CD8-positive, alpha-beta T cell (primary cell): ENCODE measurements at regions of chr17 and their contacts with region 1.

Region 1: GRCh38 chr17:21457051-21458026 is 81.2 kb downstream of the KCNJ12 start:
- DNase-seq: peak; percentile 81 to 97 (median 90)
- ATAC-seq: peak; percentile 91
- H3K4me3 ChIP-seq: no peak overlapping the region
- H3K4me3 Mint-ChIP-seq: peak overlapping the region; percentile 15
- H3K27ac ChIP-seq: no peak overlapping the region
- H3K27ac Mint-ChIP-seq: peak overlapping the region; percentile 86
- H3K4me1 ChIP-seq: peaks cover 20% of the 10 kb centered on the region
- H3K4me1 Mint-ChIP-seq: peaks cover 22% of the 10 kb centered on the region
- H3K27me3 ChIP-seq: no peaks in the 10 kb centered on the region
- H3K27me3 Mint-ChIP-seq: peaks cover 7% of the 10 kb centered on the region
- CTCF ChIP-seq: peak; percentile 86

Region 2: DNA sequence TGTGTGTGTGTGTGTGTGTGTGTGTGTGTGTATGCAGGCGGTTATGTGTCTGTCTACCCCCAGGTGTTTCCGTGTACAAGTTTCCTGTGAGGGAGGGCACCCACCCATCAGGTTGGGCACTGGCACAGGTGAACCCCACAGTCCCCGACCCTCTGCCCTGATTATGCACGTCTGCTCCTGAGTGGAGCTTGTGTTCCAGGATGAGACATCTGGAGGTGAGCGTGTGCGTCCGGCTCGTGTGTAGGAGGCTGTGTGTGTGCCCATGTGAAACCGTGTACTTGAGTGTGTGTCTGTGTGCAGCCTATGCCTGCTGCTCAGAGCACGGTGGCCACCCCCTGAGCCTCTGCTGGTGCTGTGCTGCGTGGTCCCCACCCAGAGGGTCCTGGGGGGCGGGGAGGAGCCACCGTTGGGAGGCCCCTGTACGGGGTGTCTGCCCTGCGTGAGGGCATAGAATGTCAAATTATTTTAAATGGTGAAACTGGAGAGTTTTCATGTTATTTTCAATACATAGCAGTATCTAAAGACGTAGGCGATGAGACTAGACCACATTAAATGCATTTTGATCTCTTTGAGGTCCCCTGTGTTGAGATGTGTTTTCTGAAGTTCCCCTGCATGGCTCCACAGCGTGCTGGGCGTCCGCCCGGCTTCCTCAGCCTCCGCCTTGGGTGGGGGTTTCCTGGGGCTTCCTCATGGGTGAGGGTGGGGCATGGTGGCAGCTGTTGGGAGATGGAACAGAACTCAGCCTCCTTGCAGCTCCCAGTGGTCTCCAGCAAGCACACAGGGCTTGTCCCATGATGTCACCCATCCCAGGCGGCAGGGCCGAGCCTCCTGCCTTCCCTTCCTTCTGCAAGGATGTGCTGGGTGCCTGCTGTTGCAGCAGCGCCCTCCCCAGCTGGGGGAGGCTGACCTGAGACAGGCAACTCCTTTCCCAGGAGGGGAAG is 37.8 kb before region 1 on chr17:
- CTCF ChIA-PET with region 1: no interaction called
- POLR2A ChIA-PET with region 1: no interaction called
- intact Hi-C with region 1: loop called in 1 of 2 experiments (anchors 2 kb)
- DNase-seq: peak; percentile 15 to 90 (median 69)
- ATAC-seq: peak; percentile 79
- H3K4me3 ChIP-seq: peak overlapping the region; percentile 24 to 67
- H3K4me3 Mint-ChIP-seq: peak overlapping the region; percentile 81
- H3K27ac ChIP-seq: peak overlapping the region; percentile 48 to 88
- H3K27ac Mint-ChIP-seq: peak overlapping the region; percentile 99
- H3K4me1 ChIP-seq: peaks cover 41% of the 10 kb centered on the region
- H3K4me1 Mint-ChIP-seq: peaks cover 31% of the 10 kb centered on the region
- H3K27me3 ChIP-seq: no peaks in the 10 kb centered on the region
- H3K27me3 Mint-ChIP-seq: peaks cover 2% of the 10 kb centered on the region
- CTCF ChIP-seq: no peak

Region 3: GRCh38 chr17:21551081-21551881 is 93.9 kb after region 1 on chr17:
- CTCF ChIA-PET with region 1: interaction called, 3 read pairs
- POLR2A ChIA-PET with region 1: no interaction called
- intact Hi-C with region 1: loop called in 1 of 2 experiments (anchors 1 kb)
- DNase-seq: peak; percentile 67 to 89 (median 81)
- ATAC-seq: peak; percentile 94
- H3K4me3 ChIP-seq: peak overlapping the region; percentile 59 to 89
- H3K4me3 Mint-ChIP-seq: peak overlapping the region; percentile 86
- H3K27ac ChIP-seq: peak overlapping the region; percentile 18 to 66
- H3K27ac Mint-ChIP-seq: no peak overlapping the region
- H3K4me1 ChIP-seq: peaks cover 28% of the 10 kb centered on the region
- H3K4me1 Mint-ChIP-seq: peaks cover 35% of the 10 kb centered on the region
- H3K27me3 ChIP-seq: no peaks in the 10 kb centered on the region
- H3K27me3 Mint-ChIP-seq: peaks cover 13% of the 10 kb centered on the region
- CTCF ChIP-seq: no peak